ENCODE measurements at regions of chr9 and their contacts with region 1.

Region 1: DNA sequence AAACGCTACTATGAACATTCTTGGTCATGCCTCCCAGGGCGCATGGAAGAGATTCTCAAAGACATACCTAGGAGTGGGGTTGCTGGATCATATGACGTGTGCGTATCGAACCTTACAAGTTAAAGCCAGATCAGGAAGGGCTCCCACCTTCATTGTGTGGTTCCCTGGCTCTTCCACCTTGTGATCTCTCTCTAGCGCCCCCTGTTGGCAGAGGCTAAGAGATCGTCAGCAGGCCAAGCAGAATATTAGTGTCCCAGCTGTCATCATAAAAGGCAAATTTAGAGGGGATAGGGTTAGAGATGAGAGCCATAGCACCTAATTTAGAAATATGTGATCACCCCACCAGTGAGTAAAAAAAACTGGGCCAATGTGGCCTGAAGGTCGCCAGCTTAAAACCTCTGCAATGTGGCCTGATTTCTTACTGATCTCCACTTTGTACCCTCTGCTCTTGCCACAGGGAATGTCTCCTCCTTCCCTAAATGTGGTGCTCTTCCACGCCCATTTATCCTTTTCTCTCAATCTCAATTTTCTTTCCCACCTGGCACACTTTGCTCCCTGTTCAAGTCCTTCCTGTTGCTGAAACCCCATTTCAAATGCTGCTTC is 91.7 kb upstream of the SHB start:
- DNase-seq: no peak
- H3K4me3 ChIP-seq: no peak overlapping the region
- CTCF ChIP-seq: peak; percentile 90

Region 2: GRCh38 chr9:37994639-37995347 is 165.9 kb before region 1 on chr9:
- CTCF ChIA-PET with region 1: no interaction called
- POLR2A ChIA-PET with region 1: no interaction called
- DNase-seq: no peak
- H3K4me3 ChIP-seq: peak overlapping the region; percentile 33
- CTCF ChIP-seq: no peak

Region 3: GRCh38 chr9:38141746-38142591 is 18.7 kb before region 1 on chr9:
- CTCF ChIA-PET with region 1: interaction called, 73 read pairs
- POLR2A ChIA-PET with region 1: no interaction called
- DNase-seq: peak; percentile 40
- H3K4me3 ChIP-seq: no peak overlapping the region
- CTCF ChIP-seq: no peak

Region 4: GRCh38 chr9:38172585-38172984 is 11.9 kb after region 1 on chr9:
- CTCF ChIA-PET with region 1: interaction called, 44 read pairs
- POLR2A ChIA-PET with region 1: no interaction called
- DNase-seq: no peak
- H3K4me3 ChIP-seq: no peak overlapping the region
- CTCF ChIP-seq: no peak

Region 5: GRCh38 chr9:38178237-38178636 is 17.5 kb after region 1 on chr9:
- CTCF ChIA-PET with region 1: interaction called, 44 read pairs
- POLR2A ChIA-PET with region 1: no interaction called
- DNase-seq: no peak
- H3K4me3 ChIP-seq: no peak overlapping the region
- CTCF ChIP-seq: no peak